WTC11 (cell line): ENCODE measurements at regions of chr11 and their contacts with region 1.

Region 1: GRCh38 chr11:44936525-44936924 is 14.2 kb downstream of the TP53I11 start:
- DNase-seq: peak; percentile 93
- ATAC-seq: peak; percentile 72
- H3K4me3 Mint-ChIP-seq: no peak overlapping the region
- H3K27ac Mint-ChIP-seq: no peak overlapping the region
- H3K4me1 Mint-ChIP-seq: 0 out of 2 replicates have a peak, but pooled peaks cover 7% of the 10 kb centered on the region
- H3K27me3 Mint-ChIP-seq: no peaks in the 10 kb centered on the region; the same call in 1 of the 2 replicates
- CTCF ChIP-seq: peak; percentile 94

Region 2: GRCh38 chr11:44651535-44652155 is 284.9 kb before region 1 on chr11:
- CTCF ChIA-PET with region 1: no interaction called
- POLR2A ChIA-PET with region 1: no interaction called
- DNase-seq: no peak
- ATAC-seq: no peak
- H3K4me3 Mint-ChIP-seq: no peak overlapping the region
- H3K27ac Mint-ChIP-seq: no peak overlapping the region
- H3K4me1 Mint-ChIP-seq: no peaks in the 10 kb centered on the region
- H3K27me3 Mint-ChIP-seq: no peaks in the 10 kb centered on the region
- CTCF ChIP-seq: no peak

Region 3: GRCh38 chr11:44964526-44965209 is 28.1 kb after region 1 on chr11:
- CTCF ChIA-PET with region 1: interaction called, 36 read pairs
- POLR2A ChIA-PET with region 1: interaction called, 3 read pairs
- DNase-seq: no peak
- ATAC-seq: peak; percentile 27
- H3K4me3 Mint-ChIP-seq: no peak overlapping the region
- H3K27ac Mint-ChIP-seq: 0 out of 2 replicates have a peak overlapping the region, but pooled peaks have one; percentile 49
- H3K4me1 Mint-ChIP-seq: peaks cover 53% of the 10 kb centered on the region
- H3K27me3 Mint-ChIP-seq: no peaks in the 10 kb centered on the region
- CTCF ChIP-seq: no peak

Region 4: DNA sequence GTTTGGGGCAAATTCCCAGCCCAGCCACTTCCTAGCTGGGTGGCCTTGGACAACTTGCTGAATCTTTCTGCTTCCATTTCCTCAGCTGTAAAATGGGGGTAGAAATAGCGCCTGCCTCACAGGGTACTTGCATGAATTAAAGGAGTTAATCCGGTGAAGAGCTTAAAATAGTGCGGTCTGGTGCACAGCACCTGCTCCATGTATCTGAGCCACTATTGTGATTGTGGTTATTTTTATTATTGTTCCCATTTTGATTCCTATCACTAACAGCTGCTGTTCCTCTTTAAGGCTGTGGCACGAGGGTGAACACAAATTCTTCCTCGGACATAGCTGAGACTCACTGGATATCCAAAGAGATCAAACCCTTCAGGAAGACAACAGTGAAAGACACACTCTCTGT is 61.0 kb after region 1 on chr11:
- CTCF ChIA-PET with region 1: interaction called, 27 read pairs
- POLR2A ChIA-PET with region 1: no interaction called
- DNase-seq: no peak
- ATAC-seq: no peak
- H3K4me3 Mint-ChIP-seq: no peak overlapping the region
- H3K27ac Mint-ChIP-seq: no peak overlapping the region
- H3K4me1 Mint-ChIP-seq: peaks cover 15% of the 10 kb centered on the region
- H3K27me3 Mint-ChIP-seq: no peaks in the 10 kb centered on the region
- CTCF ChIP-seq: no peak

Region 5: GRCh38 chr11:45025716-45026492 is 89.4 kb after region 1 on chr11:
- CTCF ChIA-PET with region 1: interaction called, 43 read pairs
- POLR2A ChIA-PET with region 1: no interaction called
- DNase-seq: no peak
- ATAC-seq: peak; percentile 43
- H3K4me3 Mint-ChIP-seq: no peak overlapping the region
- H3K27ac Mint-ChIP-seq: no peak overlapping the region
- H3K4me1 Mint-ChIP-seq: peaks cover 16% of the 10 kb centered on the region
- H3K27me3 Mint-ChIP-seq: no peaks in the 10 kb centered on the region; the same call in 1 of the 2 replicates
- CTCF ChIP-seq: no peak

Region 6: DNA sequence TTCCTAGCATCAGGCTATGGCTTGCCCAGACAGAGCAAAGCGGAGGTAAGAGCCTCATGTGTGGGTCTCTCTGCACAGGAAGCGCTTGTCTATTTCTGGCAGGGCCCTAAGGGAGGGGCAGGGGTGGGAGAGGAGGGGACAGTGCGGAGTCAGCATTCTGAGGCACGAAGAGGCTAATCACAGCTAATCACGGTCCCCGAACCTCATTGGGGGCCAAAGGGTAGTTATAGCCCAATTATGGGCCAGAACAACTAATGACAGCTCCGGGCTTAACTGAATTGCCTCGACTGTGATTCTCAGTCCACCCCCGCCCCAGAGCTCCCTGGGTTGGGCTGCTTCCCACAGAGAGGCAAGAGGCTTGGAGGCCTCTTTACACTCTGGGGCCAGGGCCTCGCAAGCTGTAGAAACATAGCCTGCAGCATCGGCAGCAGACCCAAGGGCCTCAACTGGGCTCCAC is 137.2 kb after region 1 on chr11:
- CTCF ChIA-PET with region 1: interaction called, 18 read pairs
- POLR2A ChIA-PET with region 1: no interaction called
- DNase-seq: no peak
- ATAC-seq: no peak; the same call in 1 of the 2 replicates
- H3K4me3 Mint-ChIP-seq: no peak overlapping the region
- H3K27ac Mint-ChIP-seq: no peak overlapping the region
- H3K4me1 Mint-ChIP-seq: peaks cover 5% of the 10 kb centered on the region
- H3K27me3 Mint-ChIP-seq: no peaks in the 10 kb centered on the region
- CTCF ChIP-seq: no peak

Region 7: DNA sequence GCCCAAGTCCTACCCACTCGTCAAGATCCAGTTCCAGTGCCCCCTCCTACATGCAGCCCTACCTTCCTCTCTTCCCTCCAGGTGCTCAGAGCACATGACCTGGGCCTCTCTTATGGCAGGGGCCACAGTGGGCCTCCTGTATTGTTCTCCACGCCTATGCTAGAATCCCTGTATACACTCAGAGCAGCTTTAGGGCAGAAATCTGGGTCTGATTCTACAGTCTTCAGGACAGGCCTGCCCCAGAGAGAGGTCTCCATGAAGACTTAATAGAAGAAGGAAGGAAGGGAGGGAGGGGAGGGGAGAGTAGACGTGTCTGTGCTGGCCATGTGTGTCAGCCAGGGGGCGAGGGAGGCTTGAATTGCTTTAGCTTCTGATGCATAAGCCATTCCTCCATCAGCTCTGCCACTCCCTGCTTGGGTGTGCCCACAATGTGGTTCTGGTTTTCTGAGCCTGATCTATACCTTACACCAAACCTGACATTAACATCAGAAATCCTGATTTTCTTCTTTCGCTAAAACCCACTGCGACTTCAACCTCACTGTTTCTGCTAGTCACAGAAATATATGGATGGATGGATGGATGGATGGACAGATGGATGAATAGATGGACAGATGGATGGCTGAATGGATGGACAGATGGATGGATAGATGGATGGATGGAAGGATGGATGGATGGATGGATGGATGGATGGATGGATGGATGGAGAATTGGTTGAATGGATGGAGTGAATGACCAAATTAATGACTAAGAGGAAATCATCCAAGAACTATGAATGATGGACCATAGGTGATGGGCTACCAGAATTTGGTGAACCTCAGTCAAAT is 153.4 kb after region 1 on chr11:
- CTCF ChIA-PET with region 1: interaction called, 68 read pairs
- POLR2A ChIA-PET with region 1: interaction called, 3 read pairs
- DNase-seq: peak; percentile 49
- ATAC-seq: peak; percentile 16
- H3K4me3 Mint-ChIP-seq: no peak overlapping the region
- H3K27ac Mint-ChIP-seq: no peak overlapping the region; the same call in 1 of the 2 replicates
- H3K4me1 Mint-ChIP-seq: peaks cover 84% of the 10 kb centered on the region
- H3K27me3 Mint-ChIP-seq: no peaks in the 10 kb centered on the region; the same call in none of the 2 replicates
- CTCF ChIP-seq: no peak

Region 8: DNA sequence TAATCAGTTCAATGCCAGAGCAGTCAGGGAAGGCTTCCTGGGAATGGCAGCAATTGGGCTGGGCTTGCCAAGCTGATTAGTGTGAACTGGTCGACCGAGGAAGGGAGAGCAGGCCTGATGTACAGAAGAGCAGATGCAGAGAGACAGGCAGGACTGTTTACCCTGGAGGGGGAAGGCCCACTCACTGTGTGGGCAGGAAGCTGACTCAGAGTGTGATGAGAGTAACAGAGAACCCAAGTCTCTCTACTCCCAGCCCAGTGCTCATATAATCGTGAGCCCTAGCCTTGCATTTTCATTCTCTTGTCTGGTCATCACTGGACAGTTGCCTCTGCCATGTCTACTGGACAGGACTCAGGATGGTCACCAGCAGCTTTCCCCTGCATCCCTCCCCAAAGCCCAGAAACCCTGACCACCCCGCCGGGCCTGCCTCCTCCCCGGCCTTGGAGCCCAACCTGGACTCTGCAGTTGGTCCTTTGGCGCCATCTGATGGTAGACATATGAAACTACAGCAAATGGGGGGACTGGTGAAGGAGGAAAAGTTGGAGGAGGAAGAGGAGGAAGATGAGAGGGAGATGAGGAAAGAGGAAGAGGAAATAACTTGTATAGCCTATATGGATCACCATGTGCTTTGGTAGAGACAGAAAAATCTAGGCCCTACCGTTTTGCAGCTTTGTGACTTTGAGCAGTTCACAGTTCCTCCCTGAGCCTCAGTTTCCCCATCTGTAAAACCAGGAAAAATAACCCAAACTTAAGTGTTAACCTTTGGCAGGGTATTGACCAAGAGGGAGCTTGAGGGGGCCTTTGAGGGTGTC is 166.5 kb after region 1 on chr11:
- CTCF ChIA-PET with region 1: interaction called, 361 read pairs
- POLR2A ChIA-PET with region 1: interaction called, 10 read pairs
- DNase-seq: peak; percentile 68
- ATAC-seq: peak; percentile 31
- H3K4me3 Mint-ChIP-seq: no peak overlapping the region
- H3K27ac Mint-ChIP-seq: no peak overlapping the region
- H3K4me1 Mint-ChIP-seq: peaks cover 11% of the 10 kb centered on the region
- H3K27me3 Mint-ChIP-seq: 0 out of 2 replicates have a peak, but pooled peaks cover 3% of the 10 kb centered on the region
- CTCF ChIP-seq: peak; percentile 88